ENCODE measurements at regions of chr20 and their contacts with region 1.

Region 1: GRCh38 chr20:35702051-35702823 is 3.0 kb downstream of the ROMO1 start:
- DNase-seq: no peak
- H3K4me3 ChIP-seq: no peak overlapping the region
- H3K27ac ChIP-seq: no peak overlapping the region
- H3K4me1 ChIP-seq: no peaks in the 10 kb centered on the region
- H3K27me3 ChIP-seq: no peaks in the 10 kb centered on the region
- CTCF ChIP-seq: no peak

Region 2: GRCh38 chr20:35463455-35464300 is 238.6 kb before region 1 on chr20:
- intact Hi-C with region 1: loop called (anchors 10 kb)
- DNase-seq: peak; percentile 71
- H3K4me3 ChIP-seq: no peak overlapping the region
- H3K27ac ChIP-seq: no peak overlapping the region
- H3K4me1 ChIP-seq: no peaks in the 10 kb centered on the region
- H3K27me3 ChIP-seq: no peaks in the 10 kb centered on the region
- CTCF ChIP-seq: peak; percentile 74

Region 3: GRCh38 chr20:35771689-35772562 is 69.7 kb after region 1 on chr20 and contains the start of gene PHF20:
- intact Hi-C with region 1: no loop called
- DNase-seq: peak; percentile 100
- H3K4me3 ChIP-seq: peak within 1 kb of the TSS; percentile 60
- H3K27ac ChIP-seq: peak within 1 kb of the TSS; percentile 85
- H3K4me1 ChIP-seq: peaks cover 12% of the 10 kb centered on the region
- H3K27me3 ChIP-seq: no peaks in the 10 kb centered on the region
- CTCF ChIP-seq: no peak
- total RNA-seq, gene PHF20: 25.5 to 27.0 TPM

Region 4: GRCh38 chr20:36298795-36299339 is 596.6 kb after region 1 on chr20:
- intact Hi-C with region 1: no loop called
- DNase-seq: no peak
- H3K4me3 ChIP-seq: no peak overlapping the region
- H3K27ac ChIP-seq: no peak overlapping the region
- H3K4me1 ChIP-seq: no peaks in the 10 kb centered on the region
- H3K27me3 ChIP-seq: peaks cover 3% of the 10 kb centered on the region
- CTCF ChIP-seq: no peak